BJ (cell line): ENCODE measurements at regions of chr17 and their contacts with region 1.

Region 1: GRCh38 chr17:35849469-35850348 is 19.0 kb downstream of the HEATR9 start:
- DNase-seq: peak; percentile 4
- H3K4me3 ChIP-seq: no peak overlapping the region
- H3K27me3 ChIP-seq: no peaks in the 10 kb centered on the region
- CTCF ChIP-seq: peak; percentile 80

Region 2: DNA sequence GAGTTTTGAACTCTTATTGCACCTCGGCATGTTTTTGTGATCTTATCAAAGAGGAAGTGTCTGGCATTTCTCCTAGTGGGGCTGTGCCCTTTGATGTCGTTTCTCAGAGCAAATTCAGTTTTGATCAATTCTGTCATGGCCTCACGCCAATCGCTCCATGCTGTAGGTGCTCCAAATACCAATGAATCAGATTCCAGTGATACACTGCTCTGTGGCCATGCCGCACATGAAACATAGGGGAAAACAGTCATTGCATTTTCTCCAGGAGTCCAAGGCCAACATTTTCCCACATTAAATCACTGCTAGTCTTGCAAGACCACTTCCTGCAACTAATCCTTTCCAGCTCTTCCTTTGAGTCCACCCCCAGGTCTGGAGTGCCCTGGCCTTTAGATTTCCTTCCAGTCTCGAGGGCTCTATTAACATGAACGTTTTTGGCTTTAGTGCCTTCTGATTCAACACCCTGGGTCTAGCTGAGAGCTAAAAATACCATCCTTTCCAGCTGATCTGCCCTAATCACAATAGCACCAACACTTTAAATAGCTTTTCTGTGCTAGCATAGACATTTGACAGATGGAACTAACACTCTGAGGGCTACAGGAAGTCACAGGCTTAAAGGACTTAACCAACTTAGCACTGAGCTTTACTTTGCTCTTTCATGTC is 136.5 kb before region 1 on chr17:
- CTCF ChIA-PET with region 1: no interaction called
- POLR2A ChIA-PET with region 1: no interaction called
- DNase-seq: peak; percentile 78
- H3K4me3 ChIP-seq: no peak overlapping the region
- H3K27me3 ChIP-seq: no peaks in the 10 kb centered on the region
- CTCF ChIP-seq: no peak

Region 3: GRCh38 chr17:35865412-35866340 is 16.0 kb after region 1 on chr17:
- CTCF ChIA-PET with region 1: interaction called, 20 read pairs
- POLR2A ChIA-PET with region 1: no interaction called
- DNase-seq: no peak
- H3K4me3 ChIP-seq: no peak overlapping the region
- H3K27me3 ChIP-seq: no peaks in the 10 kb centered on the region
- CTCF ChIP-seq: no peak

Region 4: GRCh38 chr17:36085765-36086164 is 236.1 kb after region 1 on chr17:
- CTCF ChIA-PET with region 1: no interaction called
- POLR2A ChIA-PET with region 1: no interaction called
- DNase-seq: no peak
- H3K4me3 ChIP-seq: no peak overlapping the region
- H3K27me3 ChIP-seq: no peaks in the 10 kb centered on the region; the same call in 1 of the 2 replicates
- CTCF ChIP-seq: no peak